Activated CD4-positive, alpha-beta T cell treated with anti-CD3 and anti-CD28 coated beads, Interleukin-2, amount 10 ng/mL, durations not matched to agents 7 days and 5 days (primary cell): ENCODE measurements at regions of chr5 and their contacts with region 1.

Region 1: GRCh38 chr5:132007399-132008165 is 3.9 kb downstream of the ACSL6 start:
- DNase-seq: peak; percentile 83
- H3K4me3 Mint-ChIP-seq: no peak overlapping the region
- H3K27ac Mint-ChIP-seq: peak overlapping the region; percentile 16
- H3K4me1 Mint-ChIP-seq: peaks cover 30% of the 10 kb centered on the region
- H3K27me3 Mint-ChIP-seq: peaks cover 36% of the 10 kb centered on the region

Region 2: GRCh38 chr5:131423056-131423455 is 584.5 kb before region 1 on chr5:
- CTCF ChIA-PET with region 1: interaction called, 10 read pairs
- POLR2A ChIA-PET with region 1: no interaction called
- DNase-seq: no peak
- H3K4me3 Mint-ChIP-seq: no peak overlapping the region
- H3K27ac Mint-ChIP-seq: no peak overlapping the region
- H3K4me1 Mint-ChIP-seq: peaks cover 12% of the 10 kb centered on the region
- H3K27me3 Mint-ChIP-seq: no peaks in the 10 kb centered on the region

Region 3: DNA sequence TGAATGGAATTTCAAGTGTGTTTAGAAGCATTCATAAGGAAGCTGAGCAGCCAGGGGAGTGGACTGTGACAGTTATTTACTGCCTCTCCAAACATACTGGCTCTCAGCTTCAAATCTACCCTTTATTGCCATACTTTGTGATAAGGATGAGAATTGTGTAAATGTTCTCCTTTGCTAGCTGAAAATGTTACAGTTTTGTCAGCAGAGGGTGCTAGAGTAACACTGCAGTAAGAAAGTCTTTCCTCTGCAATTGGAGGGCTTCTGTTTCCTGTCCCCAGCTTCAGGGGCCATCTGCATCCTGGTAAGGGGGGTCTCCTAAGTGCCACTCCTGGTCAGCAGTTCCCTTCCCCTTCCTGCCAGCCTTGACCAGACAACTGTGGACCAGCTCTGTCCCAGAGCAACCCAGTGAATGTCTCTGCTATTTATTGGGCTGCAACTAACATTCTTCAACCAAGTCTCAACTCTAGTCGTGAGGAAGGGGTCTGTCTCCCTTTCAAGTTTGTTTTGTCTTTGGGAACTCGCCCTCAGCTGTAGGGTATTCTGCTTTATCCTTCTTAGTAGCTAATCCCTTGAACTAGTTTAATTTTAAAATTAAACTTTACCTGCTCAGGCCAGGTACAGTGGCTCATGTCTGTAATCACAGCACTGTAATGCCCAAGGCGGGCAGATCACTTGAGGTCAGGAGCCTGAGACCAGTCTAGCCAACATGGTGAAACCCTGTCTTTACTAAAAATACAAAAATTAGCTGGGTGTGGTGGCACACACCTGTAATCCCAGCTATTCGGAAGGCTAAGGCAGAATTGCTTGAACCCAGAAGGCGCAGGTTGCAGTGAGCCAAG is 417.9 kb before region 1 on chr5:
- CTCF ChIA-PET with region 1: interaction called, 43 read pairs
- POLR2A ChIA-PET with region 1: no interaction called
- DNase-seq: peak; percentile 42
- H3K4me3 Mint-ChIP-seq: no peak overlapping the region
- H3K27ac Mint-ChIP-seq: no peak overlapping the region
- H3K4me1 Mint-ChIP-seq: peaks cover 40% of the 10 kb centered on the region
- H3K27me3 Mint-ChIP-seq: no peaks in the 10 kb centered on the region

Region 4: GRCh38 chr5:131863700-131864099 is 143.9 kb before region 1 on chr5:
- CTCF ChIA-PET with region 1: no interaction called
- POLR2A ChIA-PET with region 1: no interaction called
- DNase-seq: no peak
- H3K4me3 Mint-ChIP-seq: no peak overlapping the region
- H3K27ac Mint-ChIP-seq: no peak overlapping the region
- H3K4me1 Mint-ChIP-seq: no peaks in the 10 kb centered on the region
- H3K27me3 Mint-ChIP-seq: peaks cover 15% of the 10 kb centered on the region

Region 5: DNA sequence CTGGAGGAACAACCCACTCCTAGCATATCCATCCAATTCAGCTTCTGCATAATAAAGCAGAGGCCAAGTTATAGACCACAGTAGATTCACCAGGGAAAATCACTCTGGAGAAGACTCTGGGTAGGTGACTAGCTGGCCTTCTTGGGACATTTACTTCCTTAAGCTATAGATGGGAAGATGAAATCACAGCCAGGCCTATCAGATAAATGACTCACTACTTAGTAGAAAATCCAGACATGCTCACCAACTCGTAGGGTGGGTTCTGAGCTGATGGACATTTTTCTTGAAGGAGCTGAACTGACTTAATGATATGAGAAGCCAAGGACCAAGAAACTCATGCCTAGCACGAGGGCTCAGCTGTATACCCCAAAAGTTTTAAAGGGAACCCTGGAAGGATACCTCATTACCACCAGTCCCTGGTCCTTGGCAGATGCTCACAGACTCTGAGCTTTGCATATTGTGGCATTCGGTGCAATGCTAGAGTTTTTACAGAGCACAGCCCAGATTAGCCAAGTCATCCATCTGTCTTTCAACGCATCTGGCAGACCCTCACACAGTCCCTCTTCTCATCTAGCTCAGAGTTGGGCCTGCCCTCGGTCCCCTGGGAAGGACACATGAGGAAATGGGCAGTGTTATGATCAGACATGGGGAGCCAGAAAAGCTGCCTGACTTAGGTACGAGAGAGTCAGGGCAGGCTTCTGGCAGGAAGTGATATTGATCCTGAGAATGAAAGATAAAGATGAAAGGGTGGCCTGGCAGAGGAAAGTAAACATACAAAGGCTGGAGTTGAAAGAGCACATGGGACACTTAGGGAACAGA is 11.2 kb before region 1 on chr5:
- CTCF ChIA-PET with region 1: interaction called, 23 read pairs
- POLR2A ChIA-PET with region 1: no interaction called
- DNase-seq: no peak
- H3K4me3 Mint-ChIP-seq: no peak overlapping the region
- H3K27ac Mint-ChIP-seq: no peak overlapping the region
- H3K4me1 Mint-ChIP-seq: peaks cover 56% of the 10 kb centered on the region
- H3K27me3 Mint-ChIP-seq: peaks cover 8% of the 10 kb centered on the region

Region 6: DNA sequence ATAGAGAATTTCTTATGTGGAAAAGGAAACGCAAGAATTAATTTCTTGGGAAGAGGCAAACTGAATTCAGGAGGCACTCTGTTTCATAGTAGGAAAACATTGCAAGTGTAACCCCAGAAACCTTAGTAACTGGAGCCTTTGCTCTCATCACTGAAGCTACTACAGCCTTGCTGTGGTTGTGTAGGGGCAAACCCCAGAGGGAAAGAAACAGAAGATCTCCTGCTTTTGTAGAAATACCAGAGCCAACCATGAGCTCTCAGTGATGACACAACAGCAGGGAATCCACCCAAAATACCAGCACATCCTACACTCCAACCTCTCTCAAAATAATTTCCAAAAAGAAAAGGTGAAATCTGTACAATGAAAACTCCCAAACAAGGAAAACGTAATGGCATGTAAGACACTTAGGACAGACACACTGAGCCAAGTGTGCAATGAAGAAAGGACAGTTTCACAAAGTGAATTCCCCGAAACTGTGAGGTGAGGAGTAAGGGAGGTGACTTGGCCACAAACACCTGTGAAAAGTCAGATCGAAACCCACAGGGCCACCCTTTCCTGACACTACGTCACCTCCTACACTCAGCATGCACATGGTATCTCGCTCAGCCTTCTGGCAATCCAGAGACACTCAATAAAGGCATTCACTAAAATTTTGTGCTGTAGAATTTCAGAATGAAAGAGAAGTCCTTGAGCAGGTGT is 12.4 kb after region 1 on chr5:
- CTCF ChIA-PET with region 1: interaction called, 13 read pairs
- POLR2A ChIA-PET with region 1: no interaction called
- DNase-seq: peak; percentile 91
- H3K4me3 Mint-ChIP-seq: peak overlapping the region; percentile 56
- H3K27ac Mint-ChIP-seq: peak overlapping the region; percentile 97
- H3K4me1 Mint-ChIP-seq: peaks cover 64% of the 10 kb centered on the region
- H3K27me3 Mint-ChIP-seq: peaks cover 49% of the 10 kb centered on the region

Region 7: DNA sequence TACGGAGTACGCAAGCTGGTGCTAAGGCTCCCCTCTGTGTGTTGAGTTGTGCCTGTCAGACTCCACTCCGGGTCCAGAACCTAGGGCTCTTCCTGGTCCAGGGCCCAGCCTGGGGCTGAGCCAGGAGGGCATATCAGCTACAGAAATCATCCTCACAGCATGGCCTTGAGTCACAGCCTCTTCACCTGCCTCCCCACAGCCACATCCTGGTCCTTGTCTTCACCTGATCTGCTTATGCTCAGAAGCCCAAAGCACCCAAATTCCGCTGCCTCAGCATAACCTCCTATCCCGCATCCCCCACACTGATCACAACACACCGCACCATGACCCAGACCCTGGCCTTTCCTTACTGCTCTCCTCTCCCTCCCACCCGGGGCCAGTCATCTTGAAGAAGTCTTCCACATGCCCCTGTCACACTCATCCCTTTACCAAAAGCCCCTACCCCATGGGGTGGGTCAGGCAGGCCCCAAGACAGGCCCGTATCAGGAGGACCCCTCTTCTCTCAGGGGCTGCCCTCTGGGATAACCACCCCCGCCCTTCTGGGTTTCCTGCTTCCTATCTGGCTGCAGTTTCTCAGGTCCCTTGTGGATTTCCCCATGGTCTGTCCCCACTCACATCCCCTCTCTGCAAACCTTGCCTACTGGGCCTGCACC is 51.6 kb after region 1 on chr5:
- CTCF ChIA-PET with region 1: interaction called, 10 read pairs
- POLR2A ChIA-PET with region 1: interaction called, 3 read pairs
- DNase-seq: peak; percentile 39
- H3K4me3 Mint-ChIP-seq: no peak overlapping the region
- H3K27ac Mint-ChIP-seq: no peak overlapping the region
- H3K4me1 Mint-ChIP-seq: peaks cover 71% of the 10 kb centered on the region
- H3K27me3 Mint-ChIP-seq: peaks cover 6% of the 10 kb centered on the region